ENCODE measurements at regions of chr1 and their contacts with region 1.

Region 1: DNA sequence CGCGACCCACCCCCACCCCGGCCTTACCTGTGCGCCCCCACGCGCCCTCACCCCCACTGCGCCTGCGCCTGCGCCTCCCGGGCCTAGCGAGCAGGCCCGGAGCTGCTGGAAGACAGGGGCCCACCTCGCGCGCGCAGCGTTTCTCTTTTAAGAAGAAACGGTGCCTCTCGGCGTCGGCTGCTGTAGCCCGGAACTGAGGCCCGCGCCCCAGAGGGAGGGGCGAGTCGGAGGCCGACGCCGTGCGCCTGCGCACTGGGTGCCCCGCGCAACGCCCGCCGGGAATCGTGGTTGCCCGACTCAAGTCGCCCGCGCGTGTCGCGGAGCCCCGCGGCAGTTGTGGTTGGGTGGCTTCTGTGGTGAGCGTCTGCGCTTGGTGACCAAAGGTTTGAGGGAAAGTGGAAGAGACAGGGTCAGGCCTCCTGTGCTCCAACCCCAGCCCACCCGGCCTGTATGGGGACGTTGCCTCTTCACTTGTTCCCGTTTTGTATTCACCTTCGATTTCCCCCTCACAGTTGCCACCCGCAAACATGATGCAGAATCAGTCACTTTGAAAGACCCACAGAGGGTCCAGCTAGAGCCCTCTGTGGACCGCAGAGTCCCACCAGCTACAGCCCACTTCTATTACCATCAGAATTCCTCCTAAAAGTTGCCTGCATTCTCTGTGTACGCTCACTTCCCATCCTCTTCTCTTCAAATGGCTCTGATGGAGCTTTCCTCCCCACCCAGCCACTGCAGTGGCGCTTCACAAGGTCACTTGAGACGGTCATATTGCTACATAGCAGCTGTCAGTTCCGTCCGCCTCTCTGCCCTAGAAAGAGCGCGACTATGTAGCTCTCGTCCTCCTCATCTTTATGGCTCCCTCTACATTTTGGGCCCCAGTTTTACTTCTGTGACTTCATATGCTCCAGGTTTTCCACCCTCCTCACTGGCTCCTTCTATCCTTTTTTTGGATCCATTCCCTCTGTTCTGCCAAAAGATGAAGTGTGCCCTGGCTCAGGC is at the start of gene ZNF692:
- DNase-seq: peak; percentile 92 to 99 (median 97)
- ATAC-seq: peak; percentile 84
- H3K4me3 ChIP-seq: peak within 1 kb of the TSS; percentile 79
- H3K4me3 Mint-ChIP-seq: peak within 1 kb of the TSS; percentile 95
- H3K27ac ChIP-seq: peak within 1 kb of the TSS; percentile 77 to 80
- H3K27ac Mint-ChIP-seq: peak within 1 kb of the TSS; percentile 93
- H3K4me1 ChIP-seq: peaks cover 57% of the 10 kb centered on the region
- H3K4me1 Mint-ChIP-seq: peaks cover 75% of the 10 kb centered on the region
- H3K27me3 ChIP-seq: no peaks in the 10 kb centered on the region
- H3K27me3 Mint-ChIP-seq: no peaks in the 10 kb centered on the region
- CTCF ChIP-seq: no peak
- total RNA-seq, gene ZNF692: 23.3 to 27.3 TPM

Region 2: DNA sequence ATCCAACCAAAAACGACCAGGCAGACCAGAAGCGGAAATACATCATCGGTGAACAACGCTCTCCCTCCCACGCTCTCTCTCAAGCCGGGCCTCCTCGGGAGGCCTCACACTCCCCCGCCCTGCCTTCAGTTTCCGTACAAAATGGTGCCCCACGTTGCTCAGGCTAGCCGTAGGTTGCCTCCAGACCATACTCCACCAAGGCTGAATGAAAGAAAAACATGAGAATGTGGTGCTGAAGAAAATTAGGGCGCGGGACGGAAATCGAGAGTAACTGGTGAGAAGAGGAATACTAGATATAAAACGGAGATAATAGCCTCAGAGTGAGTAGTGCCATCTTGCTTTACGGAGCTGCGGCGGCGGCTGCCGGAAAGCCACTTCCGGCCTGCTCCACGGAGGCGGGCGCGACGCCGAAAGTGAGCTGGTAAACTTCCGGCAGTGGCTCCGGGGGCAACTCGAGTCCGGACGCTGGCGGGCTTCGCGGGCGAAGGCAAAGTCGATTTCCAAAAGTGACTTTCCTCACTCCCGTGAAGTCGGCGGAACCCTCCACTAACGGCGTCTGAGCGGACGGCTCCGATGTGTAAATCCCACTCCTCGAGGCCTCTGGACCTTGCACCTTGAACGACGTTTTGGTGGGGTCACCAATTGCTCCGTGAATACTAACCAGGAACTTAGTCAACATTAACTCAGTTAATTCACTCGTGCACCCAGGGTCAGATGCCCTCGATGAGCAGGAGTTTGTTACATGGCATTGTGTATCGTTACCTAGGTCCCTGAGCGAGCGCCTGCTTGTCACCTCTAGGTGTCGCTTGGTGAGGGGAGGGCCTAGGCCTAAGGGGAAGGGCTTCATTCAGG is 33.1 kb before region 1 on chr1 and contains the start of gene SH3BP5L:
- CTCF ChIA-PET with region 1: interaction called, 11 read pairs
- POLR2A ChIA-PET with region 1: interaction called, 47 read pairs
- intact Hi-C with region 1: loop called in 1 of 2 experiments (anchors 1 kb)
- DNase-seq: peak; percentile 80 to 97 (median 87)
- ATAC-seq: peak; percentile 84
- H3K4me3 ChIP-seq: peak within 1 kb of the TSS; percentile 83
- H3K4me3 Mint-ChIP-seq: peak within 1 kb of the TSS; percentile 95
- H3K27ac ChIP-seq: peak within 1 kb of the TSS; percentile 96 to 98
- H3K27ac Mint-ChIP-seq: peak within 1 kb of the TSS; percentile 95
- H3K4me1 ChIP-seq: peaks cover 58% of the 10 kb centered on the region
- H3K4me1 Mint-ChIP-seq: peaks cover 64% of the 10 kb centered on the region
- H3K27me3 ChIP-seq: no peaks in the 10 kb centered on the region
- H3K27me3 Mint-ChIP-seq: no peaks in the 10 kb centered on the region
- CTCF ChIP-seq: peak; percentile 83
- total RNA-seq, gene SH3BP5L: 21.7 to 25.2 TPM

Region 3: GRCh38 chr1:248837794-248838356 is 21.3 kb before region 1 on chr1 and contains the start of gene ZNF672:
- CTCF ChIA-PET with region 1: interaction called, 65 read pairs
- POLR2A ChIA-PET with region 1: interaction called, 98 read pairs
- intact Hi-C with region 1: loop called (anchors 1 kb)
- DNase-seq: peak; percentile 81 to 96 (median 92)
- ATAC-seq: peak; percentile 85
- H3K4me3 ChIP-seq: peak within 1 kb of the TSS; percentile 81
- H3K4me3 Mint-ChIP-seq: no peak within 1 kb of the TSS
- H3K27ac ChIP-seq: peak within 1 kb of the TSS; percentile 94 to 99
- H3K27ac Mint-ChIP-seq: no peak within 1 kb of the TSS
- H3K4me1 ChIP-seq: peaks cover 37% of the 10 kb centered on the region
- H3K4me1 Mint-ChIP-seq: peaks cover 30% of the 10 kb centered on the region
- H3K27me3 ChIP-seq: no peaks in the 10 kb centered on the region
- H3K27me3 Mint-ChIP-seq: peaks cover 7% of the 10 kb centered on the region
- CTCF ChIP-seq: no peak
- total RNA-seq, gene ZNF672: 35.9 to 38.4 TPM

Region 4: GRCh38 chr1:248873409-248873992 is 14.3 kb after region 1 on chr1:
- CTCF ChIA-PET with region 1: interaction called, 4 read pairs
- POLR2A ChIA-PET with region 1: interaction called, 37 read pairs
- intact Hi-C with region 1: loop called (anchors 1 to 2 kb)
- DNase-seq: peak; percentile 77 to 95 (median 91)
- ATAC-seq: peak; percentile 75
- H3K4me3 ChIP-seq: peak overlapping the region; percentile 71
- H3K4me3 Mint-ChIP-seq: peak overlapping the region; percentile 99
- H3K27ac ChIP-seq: peak overlapping the region; percentile 52 to 79
- H3K27ac Mint-ChIP-seq: peak overlapping the region; percentile 99
- H3K4me1 ChIP-seq: peaks cover 22% of the 10 kb centered on the region
- H3K4me1 Mint-ChIP-seq: peaks cover 35% of the 10 kb centered on the region
- H3K27me3 ChIP-seq: no peaks in the 10 kb centered on the region
- H3K27me3 Mint-ChIP-seq: peaks cover 14% of the 10 kb centered on the region
- CTCF ChIP-seq: no peak